ENCODE measurements at regions of chr12 and their contacts with region 1.

Region 1: DNA sequence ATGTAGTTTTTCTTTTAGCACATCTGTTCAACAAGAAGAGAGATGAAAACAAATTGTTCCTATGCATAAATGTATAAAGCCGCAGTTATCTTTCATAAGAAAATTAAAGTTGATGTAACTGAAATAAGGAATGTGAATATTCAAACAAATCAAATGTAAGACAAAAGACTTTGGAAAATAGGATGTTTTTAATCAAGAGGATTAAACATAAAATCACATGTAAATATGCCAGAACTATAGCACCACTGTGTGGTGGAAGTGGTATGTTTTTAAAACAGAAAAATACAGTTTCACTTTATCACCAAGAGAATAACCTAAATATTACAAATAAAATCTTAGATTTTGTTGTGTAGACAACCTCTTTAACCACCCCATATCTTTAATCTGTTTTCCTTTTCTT is 40.4 kb downstream of the CAPS2 start:
- DNase-seq: peak; percentile 33
- H3K4me3 Mint-ChIP-seq: no peak overlapping the region
- H3K27ac Mint-ChIP-seq: no peak overlapping the region
- H3K4me1 Mint-ChIP-seq: peaks cover 5% of the 10 kb centered on the region
- H3K27me3 Mint-ChIP-seq: no peaks in the 10 kb centered on the region
- CTCF ChIP-seq: peak; percentile 47

Region 2: DNA sequence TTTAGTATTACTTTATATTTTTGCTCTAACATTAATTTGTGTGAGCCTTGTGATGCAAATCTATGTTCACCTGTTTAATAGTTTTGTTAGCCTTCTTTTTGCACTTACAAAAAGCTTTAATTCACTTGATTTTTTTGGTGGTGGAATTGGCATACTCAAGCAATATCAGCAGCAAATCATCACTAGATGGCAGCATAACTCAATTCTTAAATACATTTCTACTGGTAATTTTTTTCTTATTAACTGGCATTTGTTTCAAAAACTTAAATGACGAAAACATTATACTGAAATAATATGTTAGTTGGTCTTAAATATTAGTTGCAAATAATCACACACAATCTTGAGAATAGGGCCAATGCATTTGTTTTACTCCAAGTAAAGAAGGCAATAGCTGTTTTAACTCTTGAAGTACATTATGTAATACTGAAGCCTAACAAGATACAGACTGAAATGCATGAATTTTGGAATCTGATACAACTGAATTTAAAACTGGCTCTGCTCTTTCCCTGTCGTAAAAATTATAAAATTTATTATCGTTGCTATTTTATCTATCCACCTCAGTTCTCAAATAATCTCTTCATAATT is 600.6 kb before region 1 on chr12:
- CTCF ChIA-PET with region 1: interaction called, 15 read pairs
- POLR2A ChIA-PET with region 1: no interaction called
- intact Hi-C with region 1: loop called (anchors 1 kb)
- DNase-seq: peak; percentile 59
- H3K4me3 Mint-ChIP-seq: no peak overlapping the region
- H3K27ac Mint-ChIP-seq: no peak overlapping the region
- H3K4me1 Mint-ChIP-seq: no peaks in the 10 kb centered on the region
- H3K27me3 Mint-ChIP-seq: no peaks in the 10 kb centered on the region
- CTCF ChIP-seq: peak; percentile 59

Region 3: GRCh38 chr12:74747305-74747704 is 542.4 kb before region 1 on chr12:
- CTCF ChIA-PET with region 1: interaction called, 12 read pairs
- POLR2A ChIA-PET with region 1: no interaction called
- intact Hi-C with region 1: loop called (anchors 1 kb)
- DNase-seq: peak; percentile 22
- H3K4me3 Mint-ChIP-seq: no peak overlapping the region
- H3K27ac Mint-ChIP-seq: no peak overlapping the region
- H3K4me1 Mint-ChIP-seq: no peaks in the 10 kb centered on the region
- H3K27me3 Mint-ChIP-seq: no peaks in the 10 kb centered on the region
- CTCF ChIP-seq: peak; percentile 19

Region 4: GRCh38 chr12:74801625-74802024 is 488.1 kb before region 1 on chr12:
- CTCF ChIA-PET with region 1: interaction called, 20 read pairs
- POLR2A ChIA-PET with region 1: interaction called, 3 read pairs
- intact Hi-C with region 1: loop called (anchors 1 kb)
- DNase-seq: peak; percentile 54
- H3K4me3 Mint-ChIP-seq: no peak overlapping the region
- H3K27ac Mint-ChIP-seq: no peak overlapping the region
- H3K4me1 Mint-ChIP-seq: no peaks in the 10 kb centered on the region
- H3K27me3 Mint-ChIP-seq: no peaks in the 10 kb centered on the region
- CTCF ChIP-seq: no peak

Region 5: GRCh38 chr12:74849801-74850200 is 440.0 kb before region 1 on chr12:
- CTCF ChIA-PET with region 1: interaction called, 3 read pairs
- POLR2A ChIA-PET with region 1: no interaction called
- intact Hi-C with region 1: loop called (anchors 1 kb)
- DNase-seq: no peak
- H3K4me3 Mint-ChIP-seq: no peak overlapping the region
- H3K27ac Mint-ChIP-seq: no peak overlapping the region
- H3K4me1 Mint-ChIP-seq: no peaks in the 10 kb centered on the region
- H3K27me3 Mint-ChIP-seq: no peaks in the 10 kb centered on the region
- CTCF ChIP-seq: peak; percentile 11

Region 6: GRCh38 chr12:75155969-75156637 is 133.7 kb before region 1 on chr12:
- CTCF ChIA-PET with region 1: interaction called, 5 read pairs
- POLR2A ChIA-PET with region 1: no interaction called
- intact Hi-C with region 1: loop called (anchors 5 kb)
- DNase-seq: no peak
- H3K4me3 Mint-ChIP-seq: no peak overlapping the region
- H3K27ac Mint-ChIP-seq: no peak overlapping the region
- H3K4me1 Mint-ChIP-seq: no peaks in the 10 kb centered on the region
- H3K27me3 Mint-ChIP-seq: no peaks in the 10 kb centered on the region
- CTCF ChIP-seq: no peak

Region 7: DNA sequence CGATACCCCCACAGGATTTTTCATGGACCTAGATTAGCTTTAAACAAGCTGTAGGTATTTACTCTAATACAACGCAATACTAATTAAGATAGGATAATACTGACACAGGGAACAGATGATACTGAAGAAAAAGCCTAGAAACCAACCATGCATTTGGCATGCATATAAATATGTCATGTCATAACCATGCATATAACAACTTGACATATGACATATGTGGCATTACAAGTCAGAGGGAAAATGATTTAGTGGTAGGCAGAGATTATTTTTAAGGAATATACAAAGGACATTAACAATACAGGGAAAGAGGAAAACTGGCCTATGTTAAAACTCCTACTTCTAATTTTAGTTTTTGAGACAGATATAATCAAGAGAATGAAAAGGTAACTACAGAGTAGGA is 12.5 kb after region 1 on chr12:
- CTCF ChIA-PET with region 1: interaction called, 10 read pairs
- POLR2A ChIA-PET with region 1: no interaction called
- intact Hi-C with region 1: no loop called
- DNase-seq: no peak
- H3K4me3 Mint-ChIP-seq: no peak overlapping the region
- H3K27ac Mint-ChIP-seq: no peak overlapping the region
- H3K4me1 Mint-ChIP-seq: no peaks in the 10 kb centered on the region
- H3K27me3 Mint-ChIP-seq: no peaks in the 10 kb centered on the region
- CTCF ChIP-seq: no peak

Measured in MCF 10A (cell line).